CD4-positive, alpha-beta T cell (primary cell): ENCODE measurements at regions of chr11 and their contacts with region 1.

Region 1: GRCh38 chr11:1628506-1629325 is 859 bp upstream of the KRTAP5-5 start:
- DNase-seq: peak; percentile 26 to 78 (median 56)
- ATAC-seq: peak; percentile 97
- H3K4me3 ChIP-seq: no peak overlapping the region
- H3K4me3 Mint-ChIP-seq: no peak overlapping the region
- H3K27ac ChIP-seq: no peak overlapping the region
- H3K27ac Mint-ChIP-seq: no peak overlapping the region
- H3K4me1 ChIP-seq: peaks cover 10% of the 10 kb centered on the region
- H3K4me1 Mint-ChIP-seq: peaks cover 10% of the 10 kb centered on the region
- H3K27me3 ChIP-seq: peaks cover 12% of the 10 kb centered on the region in 2 experiments
- H3K27me3 Mint-ChIP-seq: peaks cover 40% of the 10 kb centered on the region
- CTCF ChIP-seq: peak; percentile 84

Region 2: GRCh38 chr11:1546536-1547400 is 81.9 kb before region 1 on chr11:
- CTCF ChIA-PET with region 1: no interaction called
- POLR2A ChIA-PET with region 1: no interaction called
- intact Hi-C with region 1: loop called (anchors 1 to 5 kb)
- DNase-seq: peak in 11 of 14 experiments; percentile 27 to 79 (median 45)
- ATAC-seq: peak; percentile 80
- H3K4me3 ChIP-seq: no peak overlapping the region
- H3K4me3 Mint-ChIP-seq: no peak overlapping the region
- H3K27ac ChIP-seq: no peak overlapping the region
- H3K27ac Mint-ChIP-seq: no peak overlapping the region
- H3K4me1 ChIP-seq: peaks cover 26% of the 10 kb centered on the region
- H3K4me1 Mint-ChIP-seq: peaks cover 4% of the 10 kb centered on the region
- H3K27me3 ChIP-seq: peaks cover 26 to 47% of the 10 kb centered on the region in 2 experiments
- H3K27me3 Mint-ChIP-seq: peaks cover 44% of the 10 kb centered on the region
- CTCF ChIP-seq: peak; percentile 70

Region 3: DNA sequence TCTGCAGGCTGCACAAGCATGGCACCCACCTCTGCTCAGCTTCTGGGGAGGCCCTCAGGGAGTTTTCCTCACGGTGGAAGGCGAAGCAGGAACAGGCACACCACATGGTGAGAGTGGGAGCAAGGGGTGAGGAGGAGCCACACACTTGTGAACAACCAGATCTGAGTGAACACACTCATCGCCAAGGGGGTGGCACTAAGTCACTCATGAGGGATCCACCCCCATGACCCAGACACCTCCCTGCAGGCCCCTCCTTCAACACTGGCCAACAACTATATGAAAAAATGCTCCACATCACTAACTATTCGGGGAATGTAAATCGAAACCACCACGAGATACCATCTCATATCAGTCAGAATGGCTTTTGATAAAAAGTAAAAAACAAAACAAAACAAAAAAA is 29.9 kb before region 1 on chr11:
- CTCF ChIA-PET with region 1: no interaction called
- POLR2A ChIA-PET with region 1: no interaction called
- intact Hi-C with region 1: loop called in 1 of 2 experiments (anchors 2 kb)
- DNase-seq: peak in 2 of 14 experiments; percentile 35 to 45
- ATAC-seq: peak; percentile 26
- H3K4me3 ChIP-seq: no peak overlapping the region
- H3K4me3 Mint-ChIP-seq: no peak overlapping the region
- H3K27ac ChIP-seq: no peak overlapping the region
- H3K27ac Mint-ChIP-seq: no peak overlapping the region
- H3K4me1 ChIP-seq: peaks cover 7% of the 10 kb centered on the region
- H3K4me1 Mint-ChIP-seq: peaks cover 13% of the 10 kb centered on the region
- H3K27me3 ChIP-seq: peaks cover 4 to 10% of the 10 kb centered on the region in 2 experiments
- H3K27me3 Mint-ChIP-seq: peaks cover 60% of the 10 kb centered on the region
- CTCF ChIP-seq: no peak